Lower lobe of right lung (tissue), 2 donors: ENCODE measurements at regions of chr1 and their contacts with region 1.

Region 1: DNA sequence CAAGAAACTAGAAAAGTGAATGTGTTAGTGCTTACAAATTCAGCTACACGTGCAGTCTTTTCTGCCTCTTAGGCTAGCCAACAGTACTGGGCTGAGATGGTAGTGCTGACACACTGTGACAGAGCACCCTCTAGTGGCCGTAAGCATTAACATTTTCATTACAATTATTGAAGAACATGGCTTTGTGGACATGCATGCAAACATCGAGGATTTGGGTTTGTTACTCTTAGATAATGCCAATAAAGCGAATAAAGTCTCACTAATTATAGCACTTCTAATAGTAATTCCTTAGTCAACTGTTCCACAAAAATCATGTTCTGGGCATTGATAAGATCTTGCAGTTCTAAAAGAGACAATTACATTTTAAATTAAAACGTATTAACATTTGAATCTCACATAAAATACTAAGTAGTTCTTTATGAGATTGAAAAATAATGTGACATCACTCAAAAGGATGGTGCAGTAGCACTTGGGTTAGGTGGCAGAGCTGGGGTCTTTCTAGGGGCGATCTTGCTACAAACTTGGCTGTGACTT is 47.1 kb downstream of the MYSM1 start:
- DNase-seq: no peak
- ATAC-seq: peak; percentile 94 to 95
- H3K4me3 ChIP-seq: no peak overlapping the region
- H3K27ac ChIP-seq: no peak overlapping the region
- H3K4me1 ChIP-seq: peaks cover 10% of the 10 kb centered on the region
- H3K27me3 ChIP-seq: no peaks in the 10 kb centered on the region
- CTCF ChIP-seq: peak; percentile 78

Region 2: GRCh38 chr1:58515794-58516401 is 136.8 kb before region 1 on chr1:
- intact Hi-C with region 1: loop called (anchors 10 kb)
- DNase-seq: no peak
- ATAC-seq: peak; percentile 76 to 82
- H3K4me3 ChIP-seq: no peak overlapping the region
- H3K27ac ChIP-seq: no peak overlapping the region
- H3K4me1 ChIP-seq: peaks cover 3% of the 10 kb centered on the region
- H3K27me3 ChIP-seq: no peaks in the 10 kb centered on the region
- CTCF ChIP-seq: peak; percentile 76

Region 3: DNA sequence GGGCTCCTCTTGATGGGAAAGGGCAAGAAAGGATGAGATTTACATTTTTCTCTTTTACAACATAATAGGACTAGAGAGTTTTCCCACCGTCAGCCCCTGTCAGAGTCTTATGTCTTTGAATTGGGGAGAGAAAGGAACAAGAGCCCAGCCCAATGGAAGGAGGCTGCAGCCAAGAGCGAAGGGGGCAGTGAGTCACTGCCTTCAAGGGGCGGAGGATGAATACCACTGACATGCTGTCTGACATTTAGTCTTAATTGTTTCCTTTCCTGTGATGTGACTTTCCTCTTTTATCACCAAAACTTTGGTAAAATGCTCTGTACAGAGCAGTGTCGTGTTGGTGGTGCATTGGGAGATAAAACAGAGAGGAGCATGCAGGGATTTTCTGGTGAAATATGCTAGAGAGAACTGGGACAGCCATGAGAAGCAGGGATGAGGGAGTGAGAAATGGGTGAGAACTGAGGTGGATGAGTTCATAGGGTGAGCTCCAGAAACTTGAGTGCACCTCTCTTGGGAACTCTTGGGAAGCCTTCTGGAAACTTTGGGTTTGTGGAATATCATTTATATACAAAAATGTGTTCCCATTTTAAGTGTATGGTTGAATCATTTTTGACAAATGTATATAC is 464.3 kb after region 1 on chr1:
- intact Hi-C with region 1: no loop called
- DNase-seq: no peak
- ATAC-seq: no peak
- H3K4me3 ChIP-seq: no peak overlapping the region
- H3K27ac ChIP-seq: no peak overlapping the region
- H3K4me1 ChIP-seq: no peaks in the 10 kb centered on the region
- H3K27me3 ChIP-seq: no peaks in the 10 kb centered on the region
- CTCF ChIP-seq: no peak